ENCODE measurements at regions of chr9 and their contacts with region 1.

Region 1: DNA sequence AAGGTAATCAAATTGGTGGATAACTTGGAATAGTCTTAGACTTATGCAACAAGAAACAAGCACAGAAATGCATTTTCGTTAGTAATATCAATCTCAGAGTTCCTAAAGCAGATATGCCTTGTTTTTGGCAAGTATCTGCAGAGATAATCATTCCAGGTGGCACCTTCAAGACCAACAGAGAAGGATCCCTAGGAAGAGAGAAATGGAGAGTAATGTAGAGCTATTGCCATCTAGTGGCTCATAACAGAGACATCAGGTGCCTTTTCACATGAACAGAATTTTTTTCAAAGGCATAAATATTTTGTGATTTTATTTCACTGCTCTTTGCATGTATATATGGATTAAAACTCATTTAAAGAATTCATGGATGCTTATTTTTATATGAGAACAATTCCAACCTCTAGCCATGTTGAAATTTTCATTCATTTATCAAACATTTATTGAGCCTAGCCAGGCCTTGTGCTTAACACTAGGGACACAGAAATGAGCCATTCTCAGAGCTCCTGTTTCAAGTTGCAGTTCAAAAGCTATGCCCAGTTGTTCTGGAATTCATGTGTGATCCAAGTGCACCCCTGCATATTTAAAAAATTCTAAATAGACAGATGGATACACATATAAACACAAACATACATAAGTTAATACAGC is 117.5 kb upstream of the OR13F1 start:
- DNase-seq: peak; percentile 27
- H3K4me3 ChIP-seq: no peak overlapping the region
- H3K27ac ChIP-seq: no peak overlapping the region
- H3K4me1 ChIP-seq: no peaks in the 10 kb centered on the region
- H3K27me3 ChIP-seq: no peaks in the 10 kb centered on the region
- CTCF ChIP-seq: peak; percentile 74 to 78

Region 2: DNA sequence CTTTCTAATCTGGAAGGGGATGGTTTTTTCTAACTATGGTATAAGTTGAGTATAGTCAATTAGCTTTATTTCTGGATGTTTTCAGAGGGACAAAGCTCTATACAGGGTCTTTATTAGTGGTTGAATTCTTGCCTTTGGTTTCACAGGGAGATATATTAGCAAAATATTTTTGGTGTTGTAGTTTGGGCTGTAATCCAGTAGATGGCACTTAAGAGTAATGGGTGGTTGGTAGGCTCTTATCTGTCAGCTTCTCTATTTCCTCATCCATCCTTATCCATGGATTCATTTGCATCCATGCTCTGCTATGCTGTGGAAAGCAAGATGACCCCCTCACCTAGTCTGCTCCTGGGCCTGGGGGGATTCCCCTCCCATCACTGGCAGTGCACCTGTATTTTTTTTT is 1755.0 kb before region 1 on chr9:
- CTCF ChIA-PET with region 1: no interaction called
- dilution Hi-C with region 1: no loop called
- in situ Hi-C with region 1: no loop called
- intact Hi-C with region 1: loop called (anchors 10 kb)
- DNase-seq: peak; percentile 11
- H3K4me3 ChIP-seq: no peak overlapping the region
- H3K27ac ChIP-seq: no peak overlapping the region
- H3K4me1 ChIP-seq: no peaks in the 10 kb centered on the region
- H3K27me3 ChIP-seq: no peaks in the 10 kb centered on the region
- CTCF ChIP-seq: peak; percentile 34 to 56

Region 3: DNA sequence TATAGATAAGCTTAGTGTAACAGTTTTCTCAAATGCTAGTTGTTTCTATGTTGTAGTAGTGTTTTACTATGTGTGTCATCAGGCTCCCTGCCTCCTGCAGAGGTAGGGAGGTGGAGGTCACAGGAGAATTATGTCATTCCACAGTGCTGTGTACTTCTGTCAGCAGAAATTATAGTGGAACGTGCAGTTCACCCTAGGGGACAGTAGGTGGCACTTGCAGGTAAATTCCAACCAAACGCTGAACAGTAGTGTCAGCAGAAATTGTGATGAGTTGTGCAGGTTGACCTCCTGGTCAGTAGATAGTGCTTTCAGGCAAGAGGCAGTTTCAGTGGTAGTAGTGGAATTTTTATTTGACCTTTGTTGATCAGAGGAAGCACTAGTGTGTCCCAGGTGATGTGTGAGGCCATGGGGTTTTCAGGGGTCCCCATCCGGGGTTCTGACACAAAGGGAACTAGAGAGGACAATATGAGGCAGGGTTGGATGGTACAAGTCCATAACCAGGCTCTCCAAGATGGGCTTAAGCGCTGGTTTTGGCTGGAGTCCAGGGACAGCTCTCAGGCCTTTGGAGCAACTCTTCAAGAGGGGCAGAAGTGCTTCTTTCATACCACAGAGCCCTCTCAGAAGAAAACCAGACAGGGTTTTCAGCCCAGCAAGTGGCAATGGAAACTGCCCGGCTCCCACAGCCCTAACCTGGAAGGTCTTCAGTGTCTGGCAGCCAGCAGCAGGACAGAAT is 988.5 kb before region 1 on chr9:
- CTCF ChIA-PET with region 1: no interaction called
- dilution Hi-C with region 1: no loop called
- in situ Hi-C with region 1: loop called in 1 of 2 experiments (anchors 25 kb)
- intact Hi-C with region 1: loop called (anchors 5 kb)
- DNase-seq: peak; percentile 58
- H3K4me3 ChIP-seq: no peak overlapping the region
- H3K27ac ChIP-seq: no peak overlapping the region
- H3K4me1 ChIP-seq: no peaks in the 10 kb centered on the region
- H3K27me3 ChIP-seq: no peaks in the 10 kb centered on the region
- CTCF ChIP-seq: peak; percentile 85 to 87

Region 4: GRCh38 chr9:103789686-103790085 is 596.9 kb before region 1 on chr9:
- CTCF ChIA-PET with region 1: no interaction called
- dilution Hi-C with region 1: no loop called
- in situ Hi-C with region 1: no loop called
- intact Hi-C with region 1: loop called (anchors 5 kb)
- DNase-seq: peak; percentile 33
- H3K4me3 ChIP-seq: no peak overlapping the region
- H3K27ac ChIP-seq: no peak overlapping the region
- H3K4me1 ChIP-seq: no peaks in the 10 kb centered on the region
- H3K27me3 ChIP-seq: no peaks in the 10 kb centered on the region
- CTCF ChIP-seq: peak; percentile 76 to 77

Region 5: GRCh38 chr9:104027295-104027694 is 359.3 kb before region 1 on chr9:
- CTCF ChIA-PET with region 1: no interaction called
- dilution Hi-C with region 1: no loop called
- in situ Hi-C with region 1: no loop called
- intact Hi-C with region 1: loop called (anchors 5 kb)
- DNase-seq: no peak
- H3K4me3 ChIP-seq: no peak overlapping the region
- H3K27ac ChIP-seq: no peak overlapping the region
- H3K4me1 ChIP-seq: no peaks in the 10 kb centered on the region
- H3K27me3 ChIP-seq: no peaks in the 10 kb centered on the region
- CTCF ChIP-seq: no peak

Region 6: DNA sequence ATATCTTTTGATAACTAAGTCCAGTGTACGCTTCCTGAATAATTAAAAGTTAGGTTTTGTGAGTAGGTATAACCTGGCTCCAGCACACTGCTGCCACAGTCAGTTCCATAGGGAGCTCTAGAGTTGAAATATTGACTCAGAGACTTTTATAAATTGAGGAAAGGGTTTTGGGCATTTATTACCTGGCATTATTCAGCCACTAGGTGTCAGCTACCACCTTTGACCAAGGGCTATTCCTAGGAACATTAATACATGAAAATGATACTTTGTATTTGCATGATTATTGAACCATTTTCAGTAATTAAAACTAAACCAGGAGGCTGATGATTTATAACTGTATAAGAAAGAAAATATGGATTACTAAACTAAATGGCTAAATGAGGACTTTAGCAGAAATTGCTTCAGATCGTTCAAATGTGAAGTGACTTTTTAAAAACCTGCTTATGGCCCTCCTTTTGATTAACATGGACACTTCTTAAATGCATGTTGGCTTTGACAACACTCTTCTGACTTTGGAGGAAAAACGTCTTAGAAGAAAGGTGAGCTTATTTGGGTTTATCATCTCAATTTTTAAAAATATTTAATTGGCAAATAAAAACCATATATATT is 209.4 kb before region 1 on chr9:
- CTCF ChIA-PET with region 1: interaction called, 17 read pairs
- dilution Hi-C with region 1: no loop called
- in situ Hi-C with region 1: loop called (anchors 5 kb)
- intact Hi-C with region 1: loop called (anchors 1 kb)
- DNase-seq: peak; percentile 32
- H3K4me3 ChIP-seq: no peak overlapping the region
- H3K27ac ChIP-seq: no peak overlapping the region
- H3K4me1 ChIP-seq: no peaks in the 10 kb centered on the region
- H3K27me3 ChIP-seq: no peaks in the 10 kb centered on the region
- CTCF ChIP-seq: peak; percentile 67 to 76

Region 7: DNA sequence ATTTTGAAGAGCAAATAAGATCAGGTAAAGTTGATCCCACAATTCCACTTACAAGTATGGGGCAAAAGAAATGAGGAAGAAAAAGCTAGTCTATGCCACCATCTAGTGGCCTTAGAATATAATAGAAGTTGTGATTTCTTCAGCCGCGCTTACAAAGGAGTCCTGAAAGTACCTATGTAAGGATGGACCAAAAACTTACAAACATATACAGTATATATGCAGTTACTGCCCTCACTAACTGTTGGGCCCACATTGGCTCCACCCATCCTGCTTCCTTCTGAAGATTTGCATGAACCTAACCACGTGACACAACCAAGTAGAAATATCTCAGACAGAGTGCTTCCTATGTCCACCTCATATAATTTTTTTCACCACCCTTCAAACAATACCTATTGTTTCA is 296.1 kb after region 1 on chr9:
- CTCF ChIA-PET with region 1: no interaction called
- dilution Hi-C with region 1: no loop called
- in situ Hi-C with region 1: no loop called
- intact Hi-C with region 1: loop called (anchors 5 kb)
- DNase-seq: peak; percentile 41
- H3K4me3 ChIP-seq: no peak overlapping the region
- H3K27ac ChIP-seq: no peak overlapping the region
- H3K4me1 ChIP-seq: no peaks in the 10 kb centered on the region
- H3K27me3 ChIP-seq: no peaks in the 10 kb centered on the region
- CTCF ChIP-seq: peak; percentile 29 to 54

Region 8: GRCh38 chr9:104700306-104701028 is 313.9 kb after region 1 on chr9:
- CTCF ChIA-PET with region 1: no interaction called
- dilution Hi-C with region 1: no loop called
- in situ Hi-C with region 1: no loop called
- intact Hi-C with region 1: no loop called
- DNase-seq: no peak
- H3K4me3 ChIP-seq: no peak overlapping the region
- H3K27ac ChIP-seq: no peak overlapping the region
- H3K4me1 ChIP-seq: no peaks in the 10 kb centered on the region
- H3K27me3 ChIP-seq: no peaks in the 10 kb centered on the region
- CTCF ChIP-seq: no peak

Region 9: GRCh38 chr9:105318729-105319191 is 932.2 kb after region 1 on chr9:
- CTCF ChIA-PET with region 1: no interaction called
- dilution Hi-C with region 1: no loop called
- in situ Hi-C with region 1: no loop called
- intact Hi-C with region 1: no loop called
- DNase-seq: no peak
- H3K4me3 ChIP-seq: no peak overlapping the region
- H3K27ac ChIP-seq: no peak overlapping the region
- H3K4me1 ChIP-seq: no peaks in the 10 kb centered on the region
- H3K27me3 ChIP-seq: no peaks in the 10 kb centered on the region
- CTCF ChIP-seq: no peak